Heart left ventricle (tissue), 16 donors: ENCODE measurements at regions of chr13 and their contacts with region 1.

Region 1: GRCh38 chr13:42102961-42103865 is 54.8 kb downstream of the DGKH start:
- DNase-seq: no peak
- ATAC-seq: no peak
- H3K4me3 ChIP-seq: no peak overlapping the region
- H3K27ac ChIP-seq: no peak overlapping the region
- H3K4me1 ChIP-seq: peaks cover 0 to 24% (median 12%) of the 10 kb centered on the region in 12 donors
- H3K27me3 ChIP-seq: no peaks in the 10 kb centered on the region
- CTCF ChIP-seq: no peak
- POLR2A ChIP-seq: no peak

Region 2: DNA sequence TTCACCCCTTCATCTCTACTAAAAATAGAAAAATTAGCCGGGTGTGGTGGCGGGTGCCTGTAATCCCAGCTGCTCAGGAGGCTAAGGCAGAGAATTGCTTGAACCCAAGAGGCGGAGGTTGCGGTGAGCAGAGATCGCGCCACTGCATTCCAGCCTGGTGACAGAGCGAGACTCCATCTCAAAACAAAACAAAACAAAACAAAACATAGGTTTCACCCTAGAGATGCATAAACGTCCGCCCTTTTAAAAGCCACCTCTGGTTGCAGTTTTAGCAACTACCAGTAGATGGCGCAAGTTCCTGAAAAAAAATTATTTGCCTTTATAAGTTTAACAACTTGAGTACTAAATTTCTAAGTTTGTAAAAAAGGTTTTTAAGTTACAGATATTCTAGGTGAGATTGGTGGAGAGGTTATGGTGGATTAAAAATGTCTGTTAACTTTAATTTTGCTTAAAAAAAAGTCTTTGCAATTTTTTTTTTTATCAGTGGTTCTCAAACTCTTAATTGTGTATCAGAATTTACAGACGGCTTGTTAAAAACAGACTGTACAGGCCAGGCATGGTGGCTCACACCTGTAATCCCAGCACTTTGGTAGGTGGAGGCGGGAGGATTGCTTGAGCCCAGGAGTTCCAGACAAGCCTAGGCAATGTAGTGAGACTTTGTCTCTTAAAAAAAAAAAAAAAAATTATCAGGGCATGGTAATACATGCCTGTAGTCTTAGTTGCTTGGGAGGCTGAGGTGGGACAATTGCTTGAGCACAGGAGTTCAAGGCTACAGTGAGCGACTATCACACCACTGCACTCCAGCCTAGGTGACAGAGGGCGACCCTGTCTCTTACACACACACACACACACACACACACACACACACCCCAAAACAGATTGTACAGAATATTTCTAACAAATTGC is 750.0 kb before region 1 on chr13:
- intact Hi-C with region 1: loop called in 1 of 10 experiments (anchors 10 kb)
- DNase-seq: peak in 1 of 5 donors; percentile 40
- ATAC-seq: peak in 3 of 4 donors; percentile 38 to 58 (median 46)
- H3K4me3 ChIP-seq: no peak overlapping the region
- H3K27ac ChIP-seq: peak overlapping the region in 1 of 12 donors; percentile 44
- H3K4me1 ChIP-seq: peaks cover 0 to 26% (median 0%) of the 10 kb centered on the region in 12 donors
- H3K27me3 ChIP-seq: no peaks in the 10 kb centered on the region
- CTCF ChIP-seq: peak; percentile 72 to 89 (median 83)
- POLR2A ChIP-seq: no peak

Region 3: DNA sequence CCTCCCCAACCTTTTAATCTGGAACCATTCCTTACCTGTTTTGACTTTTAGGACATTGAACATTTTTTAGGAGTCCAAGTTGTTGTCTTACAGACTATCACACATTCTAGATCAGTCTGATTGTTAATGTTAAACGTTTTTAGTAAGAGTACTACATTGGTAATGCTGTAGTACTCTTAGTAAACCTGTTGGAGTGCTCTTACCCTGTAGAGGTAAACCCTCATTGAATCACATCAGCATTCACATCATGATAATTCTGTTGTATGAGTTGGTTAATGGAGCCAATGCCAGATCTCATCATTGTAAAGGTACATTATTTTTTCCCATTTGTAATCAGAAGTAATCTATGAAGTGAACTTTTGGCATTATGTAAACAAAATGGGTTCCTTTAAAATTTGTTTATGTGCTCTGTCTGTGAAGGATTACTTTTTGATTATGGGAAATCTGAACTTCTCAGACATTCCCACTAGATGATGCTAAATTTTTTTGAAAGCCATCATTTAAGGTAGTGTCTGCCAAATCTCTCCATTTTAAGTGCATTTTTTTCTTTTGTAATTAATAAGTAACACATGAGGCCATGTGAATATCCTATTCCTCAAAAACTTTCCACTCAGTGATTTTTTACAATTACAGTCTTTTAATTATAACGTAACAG is 197.5 kb before region 1 on chr13:
- intact Hi-C with region 1: loop called in 7 of 10 experiments (anchors 5 to 10 kb)
- DNase-seq: no peak
- ATAC-seq: peak in 3 of 4 donors; percentile 42 to 65 (median 55)
- H3K4me3 ChIP-seq: no peak overlapping the region
- H3K27ac ChIP-seq: no peak overlapping the region
- H3K4me1 ChIP-seq: no peaks in the 10 kb centered on the region
- H3K27me3 ChIP-seq: no peaks in the 10 kb centered on the region
- CTCF ChIP-seq: peak; percentile 35 to 66 (median 48)
- POLR2A ChIP-seq: no peak

Region 4: DNA sequence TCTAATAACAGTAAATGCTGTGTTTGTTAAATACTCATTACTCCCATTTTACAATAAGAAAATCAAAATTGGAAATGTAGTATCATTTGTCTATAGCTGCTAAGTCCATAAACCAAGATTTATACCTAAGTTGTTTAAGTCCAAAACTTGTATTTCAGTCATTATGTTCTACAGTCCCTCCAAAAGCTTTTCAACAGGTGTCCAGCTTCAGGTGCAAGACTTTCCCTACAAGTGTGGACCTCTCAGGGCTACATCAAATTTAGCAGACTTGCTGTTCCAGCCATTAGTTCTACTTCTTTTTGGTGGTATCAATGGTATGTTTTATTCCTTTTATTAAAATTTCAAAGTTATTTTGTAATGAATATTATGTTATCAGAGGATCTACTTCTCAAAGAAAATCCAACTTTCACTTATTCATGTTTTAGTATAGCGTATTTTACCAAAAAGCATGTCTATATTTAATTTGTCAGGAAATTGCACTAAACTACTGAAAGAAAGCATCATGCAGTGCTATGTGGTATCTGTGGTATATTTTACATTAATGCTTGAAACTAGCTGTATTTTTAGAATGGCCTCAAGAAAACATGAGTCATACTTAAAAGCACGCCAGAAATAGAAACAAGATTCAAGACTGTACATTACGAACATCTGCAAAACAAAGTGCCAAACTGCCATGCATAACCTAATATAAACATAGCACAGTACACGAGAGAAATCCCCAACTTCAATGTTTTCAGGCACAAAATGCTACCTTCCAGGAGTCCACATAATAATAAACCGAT is 186.8 kb before region 1 on chr13:
- intact Hi-C with region 1: loop called in 2 of 10 experiments (anchors 10 kb)
- DNase-seq: no peak
- ATAC-seq: peak in 3 of 4 donors; percentile 39 to 58 (median 50)
- H3K4me3 ChIP-seq: peak overlapping the region in 3 of 12 donors; percentile 8 to 12 (median 10)
- H3K27ac ChIP-seq: peak overlapping the region in 11 of 12 donors; percentile 10 to 63 (median 55)
- H3K4me1 ChIP-seq: peaks cover 3 to 68% (median 48%) of the 10 kb centered on the region in 12 donors
- H3K27me3 ChIP-seq: no peaks in the 10 kb centered on the region
- CTCF ChIP-seq: no peak
- POLR2A ChIP-seq: no peak

Region 5: GRCh38 chr13:42056146-42056545 is 47.1 kb before region 1 on chr13:
- intact Hi-C with region 1: loop called in 1 of 10 experiments (anchors 10 kb)
- DNase-seq: no peak
- ATAC-seq: peak in 1 of 4 donors; percentile 26
- H3K4me3 ChIP-seq: no peak overlapping the region
- H3K27ac ChIP-seq: peak overlapping the region in 1 of 12 donors; percentile 9
- H3K4me1 ChIP-seq: peaks cover 0 to 22% (median 11%) of the 10 kb centered on the region in 12 donors
- H3K27me3 ChIP-seq: no peaks in the 10 kb centered on the region
- CTCF ChIP-seq: no peak
- POLR2A ChIP-seq: no peak

Region 6: GRCh38 chr13:42298405-42298804 is 195.2 kb after region 1 on chr13:
- intact Hi-C with region 1: no loop called
- DNase-seq: no peak
- ATAC-seq: no peak
- H3K4me3 ChIP-seq: no peak overlapping the region
- H3K27ac ChIP-seq: no peak overlapping the region
- H3K4me1 ChIP-seq: no peaks in the 10 kb centered on the region
- H3K27me3 ChIP-seq: no peaks in the 10 kb centered on the region
- CTCF ChIP-seq: no peak
- POLR2A ChIP-seq: no peak

Region 7: DNA sequence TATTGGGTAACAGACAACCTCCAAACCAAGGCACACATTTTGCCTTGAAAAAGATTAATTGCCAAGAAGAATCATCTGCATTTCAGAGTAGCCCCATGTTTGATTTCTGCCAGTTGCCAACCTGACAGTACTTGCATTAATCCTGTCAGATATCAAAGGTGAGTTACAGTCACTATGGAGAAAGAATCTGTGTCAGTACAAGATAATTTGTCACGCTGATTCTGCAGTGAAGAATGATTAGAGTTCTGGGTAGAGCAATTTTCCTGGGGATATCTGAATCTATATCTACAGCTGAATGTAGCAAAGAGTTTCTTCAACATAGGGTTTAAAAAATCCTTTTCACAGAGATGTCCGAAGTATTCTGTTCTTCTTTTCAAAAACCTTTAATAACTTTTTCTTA is 319.5 kb after region 1 on chr13:
- intact Hi-C with region 1: no loop called
- DNase-seq: no peak
- ATAC-seq: no peak
- H3K4me3 ChIP-seq: no peak overlapping the region
- H3K27ac ChIP-seq: no peak overlapping the region
- H3K4me1 ChIP-seq: no peaks in the 10 kb centered on the region
- H3K27me3 ChIP-seq: no peaks in the 10 kb centered on the region
- CTCF ChIP-seq: no peak
- POLR2A ChIP-seq: no peak